OCI-LY7 (cell line): ENCODE measurements at regions of chr7 and their contacts with region 1.

Region 1: DNA sequence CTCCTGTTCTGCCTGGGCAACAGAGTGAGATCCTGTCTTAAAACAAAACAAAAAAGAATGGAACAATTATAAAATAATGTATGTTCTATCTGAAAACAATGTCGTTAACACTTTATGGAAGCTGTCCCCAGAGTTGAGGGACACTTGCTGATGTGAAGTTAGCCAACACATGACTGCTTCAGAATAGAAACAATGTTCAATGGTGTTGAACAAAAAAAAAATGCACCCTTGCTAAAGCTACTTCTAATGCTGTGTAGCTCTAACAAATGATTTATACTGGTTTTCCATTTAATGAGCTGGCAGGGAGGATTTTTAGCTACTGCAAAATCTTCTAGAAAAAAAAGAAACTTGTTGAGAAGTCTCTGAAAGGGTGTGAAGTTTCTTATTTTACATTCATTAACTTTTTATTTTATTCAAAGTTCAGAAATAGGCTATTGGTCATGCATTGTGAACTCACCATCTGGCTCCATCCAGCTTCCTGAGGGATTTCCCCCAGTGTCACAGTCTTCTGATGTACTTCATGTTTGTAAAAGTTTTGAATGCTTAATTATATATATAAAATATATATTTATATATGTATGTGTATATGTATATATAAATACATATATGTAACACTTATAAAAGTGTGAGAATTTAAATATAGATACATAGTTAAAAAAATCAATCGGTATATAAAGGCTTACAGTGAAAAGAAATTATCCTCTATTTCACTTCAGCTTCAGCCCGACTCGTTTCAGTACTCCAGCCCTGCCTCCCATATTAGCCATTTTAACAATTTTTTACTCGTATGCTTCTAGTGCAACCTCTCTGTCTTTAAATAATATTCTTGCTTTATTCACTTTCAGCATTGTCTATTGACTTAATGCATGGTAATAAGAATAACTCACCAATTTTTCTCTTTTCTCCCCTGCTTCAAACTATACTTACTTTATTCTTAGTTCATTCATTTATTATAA is 35.0 kb downstream of the HDAC9 start:
- DNase-seq: peak; percentile 63
- H3K4me3 ChIP-seq: peak overlapping the region; percentile 47
- H3K27ac ChIP-seq: peak overlapping the region; percentile 88
- H3K4me1 ChIP-seq: peaks cover 98% of the 10 kb centered on the region
- CTCF ChIP-seq: no peak

Region 2: DNA sequence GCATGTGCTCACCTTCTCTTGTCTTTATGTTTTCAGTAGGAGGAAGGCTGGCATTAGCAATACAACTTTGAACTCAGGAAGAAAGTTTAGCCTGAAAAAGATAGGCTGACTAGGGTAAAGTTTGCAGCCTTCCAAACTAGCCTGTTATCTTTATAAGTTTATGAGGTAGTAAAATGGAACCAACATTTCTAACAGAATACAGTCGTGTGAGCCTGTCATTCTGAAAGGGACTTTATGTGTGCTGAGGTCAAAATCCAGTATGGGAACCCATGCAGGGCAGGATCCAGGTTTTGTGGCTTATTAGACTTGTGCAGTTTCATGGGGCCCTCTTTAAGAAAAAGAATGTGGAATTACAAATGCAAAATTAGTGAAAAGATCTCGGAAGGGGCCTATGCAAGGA is 301.8 kb before region 1 on chr7:
- CTCF ChIA-PET with region 1: no interaction called
- POLR2A ChIA-PET with region 1: no interaction called
- intact Hi-C with region 1: no loop called
- DNase-seq: no peak
- H3K4me3 ChIP-seq: no peak overlapping the region
- H3K27ac ChIP-seq: no peak overlapping the region
- H3K4me1 ChIP-seq: no peaks in the 10 kb centered on the region
- CTCF ChIP-seq: no peak

Region 3: DNA sequence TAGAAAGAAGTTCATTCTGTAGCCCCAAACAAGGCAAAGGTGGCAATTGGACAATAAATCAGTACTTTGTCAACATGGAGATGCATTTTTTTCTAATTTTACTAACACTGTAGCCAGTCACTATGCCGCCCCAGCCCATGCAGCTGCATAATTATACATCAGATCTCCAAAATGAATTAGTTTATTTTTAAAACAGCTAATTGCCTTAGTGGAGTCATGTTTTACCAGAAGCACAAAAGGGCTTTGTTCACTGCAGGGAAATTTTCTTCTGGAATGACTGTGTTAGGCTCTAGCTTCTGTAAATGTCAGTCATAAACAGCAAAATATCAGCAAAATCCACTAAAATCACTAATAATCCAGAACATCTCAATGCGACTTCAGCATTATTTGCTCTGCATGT is 55.0 kb before region 1 on chr7:
- CTCF ChIA-PET with region 1: no interaction called
- POLR2A ChIA-PET with region 1: no interaction called
- intact Hi-C with region 1: no loop called
- DNase-seq: no peak
- H3K4me3 ChIP-seq: no peak overlapping the region
- H3K27ac ChIP-seq: no peak overlapping the region
- H3K4me1 ChIP-seq: no peaks in the 10 kb centered on the region
- CTCF ChIP-seq: no peak

Region 4: DNA sequence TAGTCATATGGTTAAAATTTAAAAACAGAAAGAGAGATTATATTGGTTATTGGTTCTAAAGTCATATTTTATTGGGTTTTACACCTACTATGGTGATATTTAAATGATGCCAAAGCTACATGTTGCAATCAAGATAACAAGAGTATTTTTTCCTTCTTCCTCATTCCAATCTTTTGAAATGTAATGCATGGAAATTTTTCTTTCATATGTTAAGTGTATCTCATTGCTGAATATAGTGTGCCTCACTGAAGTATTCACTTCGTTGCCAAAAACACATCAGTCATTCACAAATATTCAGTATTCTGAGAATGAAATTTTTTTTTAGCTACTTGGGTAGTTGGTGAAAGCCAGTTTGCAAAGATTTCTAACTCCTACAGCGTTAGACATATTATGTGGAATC is 15.4 kb before region 1 on chr7:
- CTCF ChIA-PET with region 1: interaction called, 5 read pairs
- POLR2A ChIA-PET with region 1: interaction called, 532 read pairs
- intact Hi-C with region 1: no loop called
- DNase-seq: no peak
- H3K4me3 ChIP-seq: no peak overlapping the region
- H3K27ac ChIP-seq: no peak overlapping the region
- H3K4me1 ChIP-seq: peaks cover 93% of the 10 kb centered on the region
- CTCF ChIP-seq: no peak

Region 5: GRCh38 chr7:18552943-18553584 is 22.6 kb after region 1 on chr7:
- CTCF ChIA-PET with region 1: interaction called, 5 read pairs
- POLR2A ChIA-PET with region 1: interaction called, 14 read pairs
- intact Hi-C with region 1: no loop called
- DNase-seq: peak; percentile 54
- H3K4me3 ChIP-seq: peak overlapping the region; percentile 41
- H3K27ac ChIP-seq: peak overlapping the region; percentile 36
- H3K4me1 ChIP-seq: peaks cover 43% of the 10 kb centered on the region
- CTCF ChIP-seq: no peak

Region 6: GRCh38 chr7:19421871-19422270 is 891.4 kb after region 1 on chr7:
- CTCF ChIA-PET with region 1: no interaction called
- POLR2A ChIA-PET with region 1: interaction called, 13 read pairs
- intact Hi-C with region 1: no loop called
- DNase-seq: no peak
- H3K4me3 ChIP-seq: no peak overlapping the region
- H3K27ac ChIP-seq: no peak overlapping the region
- H3K4me1 ChIP-seq: no peaks in the 10 kb centered on the region
- CTCF ChIP-seq: no peak